Posterior vena cava (tissue), 2 donors: ENCODE measurements at regions of chr16 and their contacts with region 1.

Region 1: GRCh38 chr16:24282141-24282540 is 26.0 kb downstream of the CACNG3 start:
- DNase-seq: no peak

Region 2: GRCh38 chr16:24344785-24345184 is 62.6 kb after region 1 on chr16:
- intact Hi-C with region 1: loop called in 1 of 2 experiments (anchors 2 kb)
- DNase-seq: no peak